Naive thymus-derived CD8-positive, alpha-beta T cell (primary cell): ENCODE measurements at regions of chr17 and their contacts with region 1.

Region 1: DNA sequence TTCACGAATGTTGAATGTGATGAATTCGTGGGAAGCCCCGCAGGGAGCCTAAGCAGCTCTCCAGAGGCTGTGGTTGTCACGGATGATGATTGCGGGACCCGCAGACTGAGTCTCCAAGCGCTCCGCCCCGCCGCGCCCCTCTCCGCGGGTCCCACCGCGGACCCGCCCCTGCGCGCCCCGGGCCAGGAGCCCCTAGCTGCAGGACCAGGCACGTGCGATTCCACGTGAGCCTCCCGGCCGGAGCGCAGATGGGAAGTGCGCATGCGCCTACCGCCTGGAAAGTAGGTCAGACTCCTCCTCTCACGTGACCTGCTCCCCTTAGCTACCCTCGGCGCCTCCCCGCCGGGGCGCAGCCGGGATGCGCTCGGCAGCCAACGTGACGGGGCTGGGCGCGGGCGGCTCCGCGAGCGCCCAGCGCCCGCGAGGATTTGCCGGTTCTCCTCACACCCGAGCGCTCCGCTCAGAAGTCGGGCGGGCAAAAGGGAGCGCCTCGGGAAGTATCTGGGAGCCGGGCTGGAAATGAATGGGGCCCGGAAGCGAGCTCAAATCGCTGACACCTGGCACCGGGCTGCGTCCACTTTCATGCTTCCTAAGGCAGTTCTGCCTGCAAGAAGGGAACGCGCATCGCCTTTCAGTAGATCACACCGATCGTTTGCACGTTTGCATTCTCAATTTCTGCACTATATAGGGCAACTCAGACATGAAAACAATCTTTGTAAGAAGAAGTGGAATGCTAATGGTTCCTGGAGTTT is 26.4 kb upstream of the HLF start:
- DNase-seq: peak; percentile 70 to 92 (median 78)
- ATAC-seq: peak; percentile 87 to 96
- H3K4me3 Mint-ChIP-seq: peak overlapping the region; percentile 79 to 91 (median 88)
- H3K27ac Mint-ChIP-seq: peak overlapping the region in 8 of 10 donors; percentile 12 to 89 (median 60)
- H3K4me1 Mint-ChIP-seq: peaks cover 8 to 23% (median 19%) of the 10 kb centered on the region in 4 donors
- H3K27me3 Mint-ChIP-seq: peaks cover 9 to 19% (median 17%) of the 10 kb centered on the region in 5 donors

Region 2: GRCh38 chr17:55264645-55265298 is 26.4 kb after region 1 on chr17 and contains the start of gene HLF:
- POLR2A ChIA-PET with region 1: interaction called, 22 read pairs
- DNase-seq: peak; percentile 41 to 77 (median 62)
- ATAC-seq: peak; percentile 89 to 92
- H3K4me3 Mint-ChIP-seq: peak within 1 kb of the TSS; percentile 75 to 88 (median 82)
- H3K27ac Mint-ChIP-seq: peak within 1 kb of the TSS in 1 of 10 donors; percentile 36
- H3K4me1 Mint-ChIP-seq: peaks cover 7 to 28% (median 22%) of the 10 kb centered on the region in 4 donors
- H3K27me3 Mint-ChIP-seq: peaks cover 37 to 76% (median 57%) of the 10 kb centered on the region in 5 donors
- polyA plus RNA-seq, gene HLF: 0.03 TPM in 1 of 3 donors, not detected in the others

Region 3: GRCh38 chr17:55320594-55321426 is 82.5 kb after region 1 on chr17:
- POLR2A ChIA-PET with region 1: no interaction called
- DNase-seq: no peak
- ATAC-seq: no peak
- H3K4me3 Mint-ChIP-seq: no peak overlapping the region
- H3K27ac Mint-ChIP-seq: no peak overlapping the region
- H3K4me1 Mint-ChIP-seq: no peaks in the 10 kb centered on the region
- H3K27me3 Mint-ChIP-seq: peaks cover 0 to 3% (median 0%) of the 10 kb centered on the region in 5 donors